Dendritic cell treated with granulocyte-macrophage colony-stimulating factor and Interleukin-4, amounts not matched to agents 40 ng/mL and 50 ng/mL, for 4 days (primary cell): ENCODE measurements at regions of chr7 and their contacts with region 1.

Region 1: DNA sequence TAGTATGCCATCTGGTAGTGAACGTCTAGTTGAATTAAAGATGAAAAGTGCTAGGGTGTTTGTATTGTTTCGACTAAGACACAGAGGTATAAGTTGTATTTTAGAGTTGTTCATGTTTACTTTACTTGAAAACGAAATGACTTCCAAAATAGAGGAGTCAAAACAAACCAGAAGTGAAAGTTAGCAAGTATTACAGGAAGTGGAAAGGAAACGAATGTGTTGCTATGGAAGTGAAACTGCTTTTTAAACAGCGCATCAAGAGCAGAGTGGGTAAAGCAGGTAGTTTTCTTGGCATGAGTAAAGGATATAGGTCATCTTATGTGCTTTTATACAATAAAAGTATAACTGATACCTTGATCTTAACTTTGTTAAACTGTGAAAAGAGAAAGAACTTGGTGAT is 20.0 kb upstream of the GALNTL5 start:
- H3K4me3 Mint-ChIP-seq: peak overlapping the region; percentile 40
- H3K27ac Mint-ChIP-seq: peak overlapping the region; percentile 87
- H3K4me1 Mint-ChIP-seq: peaks cover 79% of the 10 kb centered on the region
- H3K27me3 Mint-ChIP-seq: peaks cover 4% of the 10 kb centered on the region

Region 2: GRCh38 chr7:151795168-151795811 is 140.9 kb before region 1 on chr7:
- intact Hi-C with region 1: loop called (anchors 5 kb)
- H3K4me3 Mint-ChIP-seq: no peak overlapping the region
- H3K27ac Mint-ChIP-seq: peak overlapping the region; percentile 93
- H3K4me1 Mint-ChIP-seq: peaks cover 93% of the 10 kb centered on the region
- H3K27me3 Mint-ChIP-seq: no peaks in the 10 kb centered on the region

Region 3: DNA sequence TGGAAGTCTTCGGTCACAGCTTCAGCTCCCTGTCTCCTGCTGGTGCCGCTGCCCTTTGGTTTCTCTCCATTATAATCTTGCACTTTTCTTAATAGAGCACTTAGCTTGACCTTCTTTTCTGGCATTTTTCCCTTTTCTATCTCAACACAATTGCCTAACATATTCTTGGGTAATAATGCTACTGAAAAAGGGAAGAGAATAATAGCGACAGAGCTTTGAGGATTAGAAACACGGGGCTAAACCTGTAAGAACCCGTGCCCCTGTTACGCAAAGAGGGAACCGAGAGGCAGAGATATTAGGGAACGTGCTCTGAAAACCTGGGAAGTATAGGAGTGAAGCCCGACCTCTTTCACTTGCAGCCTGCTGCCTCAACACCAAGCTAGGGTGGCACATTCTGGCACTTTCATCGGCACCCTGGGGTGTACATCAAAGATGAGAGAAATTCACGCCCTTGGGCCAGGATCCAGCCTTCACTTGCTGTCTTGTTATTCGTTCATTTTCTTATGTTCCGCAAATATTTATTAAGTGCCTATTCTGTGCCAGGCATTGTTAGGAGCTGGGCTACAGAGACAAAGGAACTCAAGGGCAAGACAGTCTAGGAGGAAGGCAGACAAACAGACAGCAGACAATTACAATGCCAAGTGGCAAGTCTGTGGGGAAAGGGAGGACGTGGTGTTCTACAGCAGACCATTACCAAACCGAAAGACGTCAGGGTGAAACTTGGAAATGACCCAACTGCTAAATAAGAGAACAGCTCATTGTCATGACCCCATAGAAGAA is 12.9 kb before region 1 on chr7:
- intact Hi-C with region 1: loop called (anchors 1 kb)
- H3K4me3 Mint-ChIP-seq: peak overlapping the region; percentile 50
- H3K27ac Mint-ChIP-seq: peak overlapping the region; percentile 95
- H3K4me1 Mint-ChIP-seq: peaks cover 89% of the 10 kb centered on the region
- H3K27me3 Mint-ChIP-seq: no peaks in the 10 kb centered on the region

Region 4: GRCh38 chr7:151992375-151992774 is 56.2 kb after region 1 on chr7:
- intact Hi-C with region 1: loop called (anchors 10 kb)
- H3K4me3 Mint-ChIP-seq: no peak overlapping the region
- H3K27ac Mint-ChIP-seq: no peak overlapping the region
- H3K4me1 Mint-ChIP-seq: peaks cover 9% of the 10 kb centered on the region
- H3K27me3 Mint-ChIP-seq: peaks cover 22% of the 10 kb centered on the region

Region 5: DNA sequence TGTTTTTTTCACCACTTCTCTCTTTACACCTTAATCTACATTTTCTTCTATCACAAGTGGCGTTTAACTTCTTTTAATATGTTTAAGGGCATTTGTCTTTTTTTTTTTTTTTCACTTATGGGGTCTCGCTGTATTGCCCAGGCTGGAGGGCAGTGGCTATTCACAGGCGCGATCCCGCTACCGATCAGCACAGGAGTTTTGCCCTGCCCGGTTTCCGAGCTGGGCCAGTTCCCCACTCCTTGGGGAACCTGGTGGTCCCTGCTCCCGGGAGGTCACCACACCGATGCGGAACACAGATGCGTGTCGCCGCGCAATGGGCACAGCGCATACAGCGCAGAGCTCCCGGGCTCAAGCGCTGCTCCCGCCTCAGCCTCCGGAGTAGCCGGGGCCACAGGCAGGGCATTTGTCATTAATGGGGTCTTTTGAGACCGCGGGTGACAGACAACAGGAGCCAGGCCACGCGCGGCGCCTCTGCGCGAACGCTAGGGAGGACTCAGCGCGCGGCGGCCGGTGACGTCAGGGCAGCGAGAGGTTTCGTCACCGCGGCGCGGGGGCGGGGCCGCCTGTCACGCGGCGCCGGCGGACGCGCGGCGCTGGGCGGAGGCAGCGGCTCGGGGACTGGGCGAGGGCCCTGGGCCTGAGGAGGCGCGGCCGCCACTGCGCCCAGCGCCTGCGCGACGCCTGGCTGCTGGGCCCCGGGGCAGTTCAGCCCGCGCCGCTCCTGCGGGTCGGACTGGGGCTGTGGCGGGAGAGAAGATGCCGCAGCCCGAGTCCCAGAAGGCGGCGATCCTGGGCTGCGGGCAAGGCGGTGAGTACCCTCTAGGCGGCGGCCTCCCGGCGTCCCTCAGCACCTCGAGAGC is 89.1 kb after region 1 on chr7 and contains the start of gene GALNT11:
- intact Hi-C with region 1: loop called (anchors 10 kb)
- H3K4me3 Mint-ChIP-seq: peak within 1 kb of the TSS; percentile 84
- H3K27ac Mint-ChIP-seq: peak within 1 kb of the TSS; percentile 90
- H3K4me1 Mint-ChIP-seq: peaks cover 17% of the 10 kb centered on the region
- H3K27me3 Mint-ChIP-seq: peaks cover 7% of the 10 kb centered on the region